HAP-1 (cell line): ENCODE measurements at regions of chr20 and their contacts with region 1.

Region 1: GRCh38 chr20:31723319-31724078 is 831 bp upstream of the BCL2L1 start:
- DNase-seq: peak; percentile 89 to 99
- H3K4me3 ChIP-seq: peak overlapping the region; percentile 91
- H3K4me1 ChIP-seq: peaks cover 32% of the 10 kb centered on the region
- H3K27me3 ChIP-seq: no peaks in the 10 kb centered on the region

Region 2: DNA sequence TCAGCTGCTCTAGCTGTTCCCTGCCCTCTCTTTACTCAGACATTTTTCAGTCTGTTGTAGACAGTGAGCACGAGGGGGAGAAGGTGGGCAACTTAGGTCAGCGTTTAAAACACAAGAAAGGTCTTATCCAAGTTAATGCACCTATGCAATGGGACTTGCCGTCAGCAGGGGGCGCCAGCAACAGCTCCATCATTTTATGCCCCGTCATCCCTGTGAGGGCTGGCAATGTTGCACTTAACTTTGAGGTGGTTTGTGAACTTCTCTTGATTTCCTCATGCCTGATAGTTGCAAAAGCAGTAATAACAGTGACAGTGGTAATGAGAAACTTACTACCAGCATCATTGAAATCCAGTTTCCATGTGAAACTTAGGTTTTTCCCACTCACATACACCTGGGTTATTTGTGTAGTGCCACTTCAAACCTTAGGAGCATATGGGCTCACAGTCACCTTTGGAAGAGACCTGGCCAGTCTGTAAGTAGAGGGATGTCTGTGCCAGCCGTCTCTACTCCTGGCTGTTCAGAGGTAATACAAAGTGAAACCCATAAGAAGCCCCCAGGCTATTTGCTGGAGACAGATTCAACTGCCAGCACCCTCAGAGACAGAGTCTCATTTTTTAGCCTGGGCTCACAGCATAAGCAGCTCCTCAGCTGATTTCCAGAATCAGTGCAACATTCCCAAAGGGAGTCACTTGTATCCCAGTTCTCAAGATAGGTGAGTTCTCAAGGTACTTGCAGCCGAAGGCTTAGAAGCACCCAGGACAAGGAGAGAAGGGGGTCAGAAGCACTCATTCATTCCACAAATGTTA is 163.2 kb before region 1 on chr20:
- in situ Hi-C with region 1: loop called (anchors 10 kb)
- DNase-seq: peak; percentile 46 to 83
- H3K4me3 ChIP-seq: no peak overlapping the region
- H3K4me1 ChIP-seq: peaks cover 6% of the 10 kb centered on the region
- H3K27me3 ChIP-seq: no peaks in the 10 kb centered on the region

Region 3: GRCh38 chr20:31661625-31662371 is 61.7 kb before region 1 on chr20:
- in situ Hi-C with region 1: loop called (anchors 5 kb)
- DNase-seq: peak; percentile 45 to 87
- H3K4me3 ChIP-seq: peak overlapping the region; percentile 22
- H3K4me1 ChIP-seq: peaks cover 28% of the 10 kb centered on the region
- H3K27me3 ChIP-seq: no peaks in the 10 kb centered on the region